CD4-positive, alpha-beta memory T cell (primary cell): ENCODE measurements at regions of chr3 and their contacts with region 1.

Region 1: GRCh38 chr3:112734718-112735350 is 93.9 kb upstream of the CCDC80 start:
- DNase-seq: peak; percentile 63 to 72 (median 69)
- H3K4me3 ChIP-seq: no peak overlapping the region
- H3K4me3 Mint-ChIP-seq: peak overlapping the region in 2 of 8 donors; percentile 3 to 5
- H3K27ac ChIP-seq: no peak overlapping the region
- H3K27ac Mint-ChIP-seq: peak overlapping the region in 5 of 7 donors; percentile 5 to 58 (median 40)
- H3K4me1 ChIP-seq: peaks cover 56% of the 10 kb centered on the region
- H3K4me1 Mint-ChIP-seq: peaks cover 30 to 50% (median 42%) of the 10 kb centered on the region in 4 donors
- H3K27me3 ChIP-seq: no peaks in the 10 kb centered on the region
- H3K27me3 Mint-ChIP-seq: no peaks in the 10 kb centered on the region

Region 2: DNA sequence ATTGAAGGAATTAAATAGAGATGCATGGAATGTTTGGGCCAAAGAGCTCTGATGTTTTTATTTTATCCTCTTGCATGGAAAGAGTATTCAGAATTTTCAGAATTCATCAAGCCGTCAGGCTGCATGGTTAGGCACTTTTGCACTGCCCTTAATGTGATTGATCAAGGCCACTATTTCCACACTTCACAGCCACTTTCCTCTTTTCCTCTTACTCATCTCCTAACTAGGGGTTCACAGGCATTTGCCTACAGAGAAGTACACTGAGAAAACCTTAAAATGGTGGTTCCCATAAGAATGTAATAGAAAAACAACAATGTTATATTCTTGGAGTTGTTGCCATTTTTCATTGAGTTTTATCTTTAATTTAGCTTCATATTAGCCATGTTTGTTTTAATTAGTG is 162.1 kb before region 1 on chr3:
- CTCF ChIA-PET with region 1: no interaction called
- POLR2A ChIA-PET with region 1: no interaction called
- intact Hi-C with region 1: no loop called
- DNase-seq: no peak
- H3K4me3 ChIP-seq: no peak overlapping the region
- H3K4me3 Mint-ChIP-seq: no peak overlapping the region
- H3K27ac ChIP-seq: no peak overlapping the region
- H3K27ac Mint-ChIP-seq: no peak overlapping the region
- H3K4me1 ChIP-seq: no peaks in the 10 kb centered on the region
- H3K4me1 Mint-ChIP-seq: peaks cover 0 to 13% (median 7%) of the 10 kb centered on the region in 4 donors
- H3K27me3 ChIP-seq: no peaks in the 10 kb centered on the region
- H3K27me3 Mint-ChIP-seq: no peaks in the 10 kb centered on the region

Region 3: GRCh38 chr3:112751564-112752512 is 17.0 kb after region 1 on chr3:
- CTCF ChIA-PET with region 1: interaction called, 59 read pairs
- POLR2A ChIA-PET with region 1: interaction called, 10 read pairs
- intact Hi-C with region 1: no loop called
- DNase-seq: no peak
- H3K4me3 ChIP-seq: no peak overlapping the region
- H3K4me3 Mint-ChIP-seq: no peak overlapping the region
- H3K27ac ChIP-seq: no peak overlapping the region
- H3K27ac Mint-ChIP-seq: no peak overlapping the region
- H3K4me1 ChIP-seq: peaks cover 21% of the 10 kb centered on the region
- H3K4me1 Mint-ChIP-seq: peaks cover 6 to 17% (median 13%) of the 10 kb centered on the region in 4 donors
- H3K27me3 ChIP-seq: no peaks in the 10 kb centered on the region
- H3K27me3 Mint-ChIP-seq: no peaks in the 10 kb centered on the region

Region 4: GRCh38 chr3:112794622-112795172 is 59.9 kb after region 1 on chr3:
- CTCF ChIA-PET with region 1: interaction called, 15 read pairs
- POLR2A ChIA-PET with region 1: interaction called, 9 read pairs
- intact Hi-C with region 1: no loop called
- DNase-seq: peak in 4 of 5 donors; percentile 17 to 25 (median 22)
- H3K4me3 ChIP-seq: no peak overlapping the region
- H3K4me3 Mint-ChIP-seq: peak overlapping the region; percentile 26 to 84 (median 68)
- H3K27ac ChIP-seq: peak overlapping the region; percentile 1
- H3K27ac Mint-ChIP-seq: peak overlapping the region; percentile 46 to 94 (median 88)
- H3K4me1 ChIP-seq: peaks cover 33% of the 10 kb centered on the region
- H3K4me1 Mint-ChIP-seq: peaks cover 26 to 36% (median 31%) of the 10 kb centered on the region in 4 donors
- H3K27me3 ChIP-seq: no peaks in the 10 kb centered on the region
- H3K27me3 Mint-ChIP-seq: no peaks in the 10 kb centered on the region

Region 5: DNA sequence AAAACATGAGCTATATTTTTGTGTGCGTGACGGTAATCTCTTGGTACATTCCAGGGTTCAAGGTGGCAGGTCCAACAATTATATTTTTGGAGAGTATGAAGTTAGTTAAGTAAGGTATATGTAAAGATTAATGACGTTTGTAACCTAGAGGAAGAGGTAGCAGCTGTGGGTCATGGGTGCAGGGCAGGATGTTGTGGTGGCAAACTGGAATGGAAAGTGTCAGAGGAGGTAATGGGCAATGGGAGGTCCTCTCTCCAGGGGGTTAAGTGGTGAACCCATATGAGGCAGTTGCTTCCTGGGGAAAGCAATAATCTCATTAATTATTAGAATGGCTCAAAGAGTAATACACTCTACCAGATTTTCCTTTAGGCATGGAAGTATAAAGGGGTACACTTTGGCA is 112.9 kb after region 1 on chr3:
- CTCF ChIA-PET with region 1: interaction called, 12 read pairs
- POLR2A ChIA-PET with region 1: interaction called, 10 read pairs
- intact Hi-C with region 1: no loop called
- DNase-seq: peak; percentile 40 to 74 (median 70)
- H3K4me3 ChIP-seq: peak overlapping the region in 1 of 2 donors; percentile 22
- H3K4me3 Mint-ChIP-seq: peak overlapping the region; percentile 4 to 80 (median 69)
- H3K27ac ChIP-seq: peak overlapping the region; percentile 15
- H3K27ac Mint-ChIP-seq: peak overlapping the region; percentile 65 to 91 (median 85)
- H3K4me1 ChIP-seq: peaks cover 26% of the 10 kb centered on the region
- H3K4me1 Mint-ChIP-seq: peaks cover 20 to 39% (median 25%) of the 10 kb centered on the region in 4 donors
- H3K27me3 ChIP-seq: no peaks in the 10 kb centered on the region
- H3K27me3 Mint-ChIP-seq: no peaks in the 10 kb centered on the region

Region 6: GRCh38 chr3:112979240-112979832 is 244.5 kb after region 1 on chr3:
- CTCF ChIA-PET with region 1: interaction called, 161 read pairs
- POLR2A ChIA-PET with region 1: interaction called, 35 read pairs
- intact Hi-C with region 1: loop called (anchors 1 kb)
- DNase-seq: peak in 4 of 5 donors; percentile 59 to 67 (median 62)
- H3K4me3 ChIP-seq: no peak overlapping the region
- H3K4me3 Mint-ChIP-seq: peak overlapping the region in 2 of 8 donors; percentile 12 to 39
- H3K27ac ChIP-seq: no peak overlapping the region
- H3K27ac Mint-ChIP-seq: peak overlapping the region in 6 of 7 donors; percentile 0 to 81 (median 42)
- H3K4me1 ChIP-seq: peaks cover 68% of the 10 kb centered on the region
- H3K4me1 Mint-ChIP-seq: peaks cover 48 to 73% (median 60%) of the 10 kb centered on the region in 4 donors
- H3K27me3 ChIP-seq: no peaks in the 10 kb centered on the region
- H3K27me3 Mint-ChIP-seq: no peaks in the 10 kb centered on the region

Region 7: DNA sequence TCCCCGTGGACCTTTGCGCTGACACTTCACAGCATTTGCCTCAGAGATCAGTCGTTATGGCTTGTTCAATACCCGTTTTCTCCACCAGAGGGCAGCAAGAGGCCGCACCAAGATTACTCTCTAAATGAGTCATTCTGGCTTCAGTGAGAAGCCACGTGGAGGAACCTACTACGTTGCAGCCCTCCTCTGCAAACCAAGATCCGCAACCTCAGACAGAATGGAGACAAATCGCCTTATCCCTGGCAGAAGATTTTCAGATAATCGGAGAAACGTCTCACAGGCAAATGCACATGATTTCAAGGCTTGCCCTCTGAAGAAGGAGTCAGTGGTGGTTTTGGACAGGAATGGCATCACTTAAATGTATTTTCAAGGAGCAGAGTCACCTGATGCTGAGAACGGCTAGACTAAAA is 316.5 kb after region 1 on chr3:
- CTCF ChIA-PET with region 1: no interaction called
- POLR2A ChIA-PET with region 1: no interaction called
- intact Hi-C with region 1: loop called (anchors 5 kb)
- DNase-seq: peak; percentile 77 to 84 (median 80)
- H3K4me3 ChIP-seq: no peak overlapping the region
- H3K4me3 Mint-ChIP-seq: no peak overlapping the region
- H3K27ac ChIP-seq: no peak overlapping the region
- H3K27ac Mint-ChIP-seq: no peak overlapping the region
- H3K4me1 ChIP-seq: peaks cover 8% of the 10 kb centered on the region
- H3K4me1 Mint-ChIP-seq: peaks cover 0 to 9% (median 2%) of the 10 kb centered on the region in 4 donors
- H3K27me3 ChIP-seq: no peaks in the 10 kb centered on the region
- H3K27me3 Mint-ChIP-seq: no peaks in the 10 kb centered on the region

Region 8: GRCh38 chr3:113117511-113118234 is 382.8 kb after region 1 on chr3:
- CTCF ChIA-PET with region 1: no interaction called
- POLR2A ChIA-PET with region 1: no interaction called
- intact Hi-C with region 1: no loop called
- DNase-seq: no peak
- H3K4me3 ChIP-seq: no peak overlapping the region
- H3K4me3 Mint-ChIP-seq: no peak overlapping the region
- H3K27ac ChIP-seq: no peak overlapping the region
- H3K27ac Mint-ChIP-seq: no peak overlapping the region
- H3K4me1 ChIP-seq: no peaks in the 10 kb centered on the region
- H3K4me1 Mint-ChIP-seq: no peaks in the 10 kb centered on the region
- H3K27me3 ChIP-seq: no peaks in the 10 kb centered on the region
- H3K27me3 Mint-ChIP-seq: no peaks in the 10 kb centered on the region

Region 9: DNA sequence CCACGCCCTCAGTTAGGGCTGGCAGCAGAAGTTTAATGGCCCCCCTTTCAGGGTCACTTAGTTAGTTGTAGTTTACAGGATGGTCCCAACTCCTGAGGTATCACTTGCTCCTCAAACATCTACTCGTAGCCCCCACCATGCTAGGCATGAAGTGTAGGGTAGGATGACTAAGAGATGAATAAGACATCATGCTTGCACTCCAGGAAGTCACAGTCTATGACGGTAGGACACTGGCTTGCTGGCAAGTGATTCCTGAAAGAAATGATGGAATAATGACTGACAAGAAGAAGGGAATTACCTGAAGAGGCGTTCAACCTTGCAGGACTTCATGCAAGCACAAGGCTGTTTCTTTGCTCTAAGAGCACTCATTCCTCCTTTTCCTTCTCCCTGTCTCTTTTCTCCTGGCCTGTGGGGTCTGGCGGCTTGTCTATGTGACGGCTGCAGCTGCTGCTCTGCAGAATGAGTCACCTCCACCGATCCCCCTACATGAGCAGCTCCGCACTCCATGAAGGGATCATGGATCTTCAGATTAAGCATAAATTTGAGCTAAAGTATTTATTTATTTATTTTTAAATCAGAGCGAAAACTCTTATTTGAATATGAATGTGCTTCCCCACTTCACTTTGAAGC is 393.7 kb after region 1 on chr3:
- CTCF ChIA-PET with region 1: no interaction called
- POLR2A ChIA-PET with region 1: no interaction called
- intact Hi-C with region 1: no loop called
- DNase-seq: no peak
- H3K4me3 ChIP-seq: no peak overlapping the region
- H3K4me3 Mint-ChIP-seq: no peak overlapping the region
- H3K27ac ChIP-seq: no peak overlapping the region
- H3K27ac Mint-ChIP-seq: no peak overlapping the region
- H3K4me1 ChIP-seq: no peaks in the 10 kb centered on the region
- H3K4me1 Mint-ChIP-seq: peaks cover 0 to 2% (median 0%) of the 10 kb centered on the region in 4 donors
- H3K27me3 ChIP-seq: no peaks in the 10 kb centered on the region
- H3K27me3 Mint-ChIP-seq: no peaks in the 10 kb centered on the region